ENCODE measurements at regions of chr3 and their contacts with region 1.

Region 1: GRCh38 chr3:72270072-72270681 is 485.2 kb upstream of the PROK2 start:
- DNase-seq: peak; percentile 65
- H3K4me3 ChIP-seq: no peak overlapping the region
- H3K27ac ChIP-seq: no peak overlapping the region
- H3K4me1 ChIP-seq: peaks cover 2% of the 10 kb centered on the region
- H3K27me3 ChIP-seq: no peaks in the 10 kb centered on the region
- CTCF ChIP-seq: no peak
- POLR2A ChIP-seq: no peak

Region 2: DNA sequence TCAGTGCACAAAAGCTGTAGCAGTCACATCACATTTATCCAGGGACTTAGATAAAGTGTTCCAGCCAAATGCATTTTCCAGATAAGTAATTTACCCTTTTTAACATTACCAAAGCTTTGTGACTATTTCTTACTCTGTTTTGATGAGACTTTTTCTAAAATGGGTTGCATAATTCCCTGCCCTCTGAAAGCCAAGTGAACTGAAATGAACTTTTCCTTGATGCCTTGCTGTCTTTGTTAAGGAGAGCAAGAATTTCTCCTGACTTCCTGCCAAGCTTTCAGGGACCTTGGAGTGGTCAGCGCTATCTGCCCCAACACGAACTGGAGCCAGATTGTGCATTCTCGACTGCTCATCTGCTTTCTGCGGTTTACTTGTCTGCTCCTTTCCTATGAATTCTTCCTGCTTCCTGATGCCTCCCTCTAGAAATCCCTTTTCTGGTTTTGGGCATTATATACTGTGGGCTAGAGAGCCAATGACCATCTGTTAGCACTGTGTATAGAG is 579.8 kb before region 1 on chr3:
- intact Hi-C with region 1: no loop called
- DNase-seq: no peak
- H3K4me3 ChIP-seq: no peak overlapping the region
- H3K27ac ChIP-seq: no peak overlapping the region
- H3K4me1 ChIP-seq: peaks cover 6% of the 10 kb centered on the region
- H3K27me3 ChIP-seq: no peaks in the 10 kb centered on the region
- CTCF ChIP-seq: no peak
- POLR2A ChIP-seq: no peak

Region 3: DNA sequence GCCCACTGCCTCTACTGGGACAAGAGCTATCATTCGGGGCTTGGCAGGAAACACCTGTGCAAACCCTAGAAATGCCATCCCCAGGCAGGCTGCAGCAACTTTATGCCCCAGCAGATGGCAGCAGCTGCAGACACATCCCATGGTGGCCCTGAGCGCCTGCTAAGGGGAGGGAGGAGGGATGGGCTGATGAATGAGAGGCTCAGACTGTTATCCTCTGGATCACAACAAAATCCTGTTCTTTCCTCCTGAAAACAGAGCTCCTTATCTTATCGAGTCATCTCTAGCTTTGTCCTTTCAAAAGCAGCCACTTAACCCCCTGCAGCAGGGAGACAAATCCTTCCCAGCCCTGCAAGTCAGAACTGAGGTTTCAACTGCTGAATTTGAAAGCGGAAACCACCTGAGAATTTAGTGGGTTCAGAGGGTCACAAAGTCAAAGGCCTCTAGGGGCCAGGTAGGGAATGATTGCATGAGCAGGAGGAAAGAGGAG is 394.7 kb before region 1 on chr3:
- intact Hi-C with region 1: loop called (anchors 10 kb)
- DNase-seq: peak; percentile 69
- H3K4me3 ChIP-seq: no peak overlapping the region
- H3K27ac ChIP-seq: no peak overlapping the region
- H3K4me1 ChIP-seq: peaks cover 3% of the 10 kb centered on the region
- H3K27me3 ChIP-seq: no peaks in the 10 kb centered on the region
- CTCF ChIP-seq: peak in 3 of 4 experiments; percentile 72 to 84 (median 79)
- POLR2A ChIP-seq: no peak

Region 4: DNA sequence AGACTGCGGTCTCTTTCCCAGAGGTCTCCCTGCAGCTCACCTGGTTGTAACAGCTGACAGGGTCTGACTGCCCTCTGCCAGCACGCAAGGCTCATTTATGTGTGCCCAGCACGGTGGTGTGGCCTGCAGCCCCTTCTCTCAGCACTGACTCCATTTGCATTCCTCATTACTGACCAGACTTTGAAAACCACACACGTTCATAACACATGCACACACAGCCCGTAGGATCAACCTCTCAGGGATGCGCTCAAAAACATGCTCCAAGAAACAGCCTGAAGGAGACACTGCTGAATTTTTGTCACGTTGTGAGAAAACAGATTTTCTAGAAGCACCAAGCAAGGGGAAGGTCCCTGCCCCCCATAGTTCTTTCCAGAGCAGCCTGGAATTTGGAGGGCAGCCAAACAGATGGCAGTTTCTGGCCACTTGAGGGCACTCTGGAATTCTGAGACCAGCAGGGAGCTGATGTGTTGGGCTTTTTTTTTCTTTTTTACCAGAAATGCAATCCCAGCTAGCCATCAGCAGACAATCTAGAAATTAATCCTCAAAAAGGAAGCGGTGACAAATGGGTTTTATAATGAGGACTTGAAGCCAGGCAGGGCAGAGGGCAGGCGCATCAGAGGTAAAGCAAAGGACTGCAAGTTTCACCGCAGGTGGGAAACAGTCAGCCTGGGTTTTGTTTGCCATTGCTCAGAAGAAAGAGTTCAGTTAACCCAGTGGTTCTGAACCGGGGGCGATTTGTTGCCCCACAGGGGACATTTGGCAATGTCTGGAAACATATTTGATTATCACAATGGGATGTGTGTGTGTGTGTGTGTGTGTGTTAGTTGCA is 314.7 kb before region 1 on chr3:
- intact Hi-C with region 1: loop called (anchors 10 kb)
- DNase-seq: peak; percentile 67
- H3K4me3 ChIP-seq: no peak overlapping the region
- H3K27ac ChIP-seq: no peak overlapping the region
- H3K4me1 ChIP-seq: no peaks in the 10 kb centered on the region
- H3K27me3 ChIP-seq: no peaks in the 10 kb centered on the region
- CTCF ChIP-seq: peak; percentile 58 to 78 (median 69)
- POLR2A ChIP-seq: no peak

Region 5: GRCh38 chr3:72177083-72178050 is 92.8 kb before region 1 on chr3:
- intact Hi-C with region 1: loop called (anchors 10 kb)
- DNase-seq: peak; percentile 58
- H3K4me3 ChIP-seq: no peak overlapping the region
- H3K27ac ChIP-seq: peak overlapping the region; percentile 28 to 65
- H3K4me1 ChIP-seq: peaks cover 6% of the 10 kb centered on the region
- H3K27me3 ChIP-seq: no peaks in the 10 kb centered on the region
- CTCF ChIP-seq: no peak
- POLR2A ChIP-seq: no peak

Region 6: DNA sequence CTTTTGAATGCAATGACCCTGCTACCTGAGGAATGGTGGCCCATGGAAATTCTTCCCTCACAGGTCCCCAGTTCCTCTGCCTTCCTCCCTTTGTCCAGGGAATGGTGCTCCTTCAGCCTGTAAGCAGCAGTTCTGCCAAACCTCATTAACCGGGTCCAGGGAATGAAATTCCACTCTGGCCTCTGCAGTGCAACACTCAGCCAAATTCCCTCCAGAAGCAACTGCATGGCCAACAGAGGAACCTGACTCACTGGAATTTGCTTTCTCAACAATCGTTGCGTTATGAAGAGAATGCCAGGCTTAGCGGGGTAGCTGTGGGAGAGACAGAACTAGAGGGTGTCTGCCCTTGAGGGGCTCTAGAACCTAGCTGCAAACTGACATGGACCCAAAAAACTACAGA is 35.8 kb before region 1 on chr3:
- intact Hi-C with region 1: loop called (anchors 5 kb)
- DNase-seq: peak; percentile 33
- H3K4me3 ChIP-seq: no peak overlapping the region
- H3K27ac ChIP-seq: no peak overlapping the region
- H3K4me1 ChIP-seq: peaks cover 11% of the 10 kb centered on the region
- H3K27me3 ChIP-seq: no peaks in the 10 kb centered on the region
- CTCF ChIP-seq: no peak
- POLR2A ChIP-seq: no peak

Measured in prostate gland (tissue), 2 donors.